HepG2 (cell line): ENCODE measurements at regions of chrX and their contacts with region 1.

Region 1: DNA sequence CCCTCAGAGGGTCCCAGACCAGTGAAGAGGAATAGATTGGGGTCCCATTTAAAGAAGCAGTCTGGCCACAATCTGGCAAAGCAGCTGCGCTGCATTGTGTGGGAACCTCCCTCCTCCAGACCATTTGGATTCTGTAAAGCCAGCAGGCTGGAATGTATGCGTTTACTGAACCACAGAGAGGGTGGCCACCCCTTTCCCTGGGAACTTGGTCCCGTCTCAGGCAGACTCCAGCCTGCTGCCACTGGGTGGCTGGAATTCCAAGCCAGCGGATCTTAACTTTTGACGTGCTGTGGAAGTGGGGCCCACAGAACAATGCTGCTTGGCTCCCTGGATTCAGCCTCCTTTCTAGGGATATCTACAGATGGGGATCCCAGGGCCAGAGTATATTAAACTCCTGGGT is 307.2 kb downstream of the DACH2 start:
- DNase-seq: no peak
- ATAC-seq: no peak
- H3K4me3 ChIP-seq: no peak overlapping the region
- H3K27ac ChIP-seq: no peak overlapping the region
- H3K4me1 ChIP-seq: no peaks in the 10 kb centered on the region
- H3K27me3 ChIP-seq: no peaks in the 10 kb centered on the region
- CTCF ChIP-seq: no peak
- EP300 ChIP-seq: no peak
- POLR2A ChIP-seq: no peak
- RAD21 ChIP-seq: no peak

Region 2: GRCh38 chrX:86322918-86323317 is 132.6 kb before region 1 on chrX:
- CTCF ChIA-PET with region 1: no interaction called
- POLR2A ChIA-PET with region 1: no interaction called
- in situ Hi-C with region 1: no loop called
- intact Hi-C with region 1: loop called (anchors 10 kb)
- DNase-seq: peak; percentile 23
- ATAC-seq: peak; percentile 94
- H3K4me3 ChIP-seq: no peak overlapping the region
- H3K27ac ChIP-seq: no peak overlapping the region
- H3K4me1 ChIP-seq: no peaks in the 10 kb centered on the region
- H3K27me3 ChIP-seq: no peaks in the 10 kb centered on the region
- CTCF ChIP-seq: peak; percentile 80
- EP300 ChIP-seq: no peak
- POLR2A ChIP-seq: no peak
- RAD21 ChIP-seq: 0 out of 2 replicates have a peak, but pooled peaks have one; percentile 60